WTC11 (cell line): ENCODE measurements at regions of chr6 and their contacts with region 1.

Region 1: GRCh38 chr6:168574699-168575195 is 133.8 kb downstream of the SMOC2 start:
- DNase-seq: no peak
- ATAC-seq: peak; percentile 60
- H3K4me3 Mint-ChIP-seq: no peak overlapping the region
- H3K27ac Mint-ChIP-seq: no peak overlapping the region
- H3K4me1 Mint-ChIP-seq: peaks cover 12% of the 10 kb centered on the region
- H3K27me3 Mint-ChIP-seq: no peaks in the 10 kb centered on the region
- CTCF ChIP-seq: no peak

Region 2: DNA sequence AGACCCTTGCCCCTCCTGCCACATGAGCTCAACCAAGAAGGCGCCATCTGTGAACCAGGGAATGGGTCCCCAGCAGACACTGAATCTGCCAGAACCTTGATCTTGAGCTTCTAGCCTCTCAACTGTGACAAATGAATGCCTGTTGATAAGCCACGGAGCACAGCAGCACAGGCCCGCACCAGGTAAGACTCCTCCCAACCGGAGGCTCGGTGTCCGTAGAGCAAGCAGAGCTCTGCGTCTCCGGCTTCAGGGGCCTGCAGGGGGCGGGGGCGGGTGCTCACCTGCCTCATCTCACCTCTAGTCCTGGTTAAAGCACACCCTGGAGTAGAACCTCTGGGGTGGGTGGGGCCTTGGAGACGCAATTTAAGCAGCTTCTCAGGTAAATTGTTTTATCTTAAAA is 11.1 kb before region 1 on chr6:
- CTCF ChIA-PET with region 1: interaction called, 12 read pairs
- POLR2A ChIA-PET with region 1: no interaction called
- DNase-seq: peak; percentile 61
- ATAC-seq: peak; percentile 100
- H3K4me3 Mint-ChIP-seq: no peak overlapping the region
- H3K27ac Mint-ChIP-seq: no peak overlapping the region
- H3K4me1 Mint-ChIP-seq: peaks cover 18% of the 10 kb centered on the region
- H3K27me3 Mint-ChIP-seq: peaks cover 9% of the 10 kb centered on the region
- CTCF ChIP-seq: no peak

Region 3: GRCh38 chr6:168616816-168617765 is 42.3 kb after region 1 on chr6:
- CTCF ChIA-PET with region 1: no interaction called
- POLR2A ChIA-PET with region 1: no interaction called
- DNase-seq: no peak
- ATAC-seq: peak; percentile 55; the same call in 1 of the 2 replicates
- H3K4me3 Mint-ChIP-seq: no peak overlapping the region
- H3K27ac Mint-ChIP-seq: no peak overlapping the region
- H3K4me1 Mint-ChIP-seq: peaks cover 9% of the 10 kb centered on the region; the same call in 1 of the 2 replicates
- H3K27me3 Mint-ChIP-seq: no peaks in the 10 kb centered on the region
- CTCF ChIP-seq: no peak